GM12878 (cell line): ENCODE measurements at regions of chr19 and their contacts with region 1.

Region 1: GRCh38 chr19:53520550-53521372 is 17.2 kb upstream of the ZNF331 start:
- DNase-seq: peak; percentile 80
- ATAC-seq: peak; percentile 100
- H3K4me3 ChIP-seq: peak overlapping the region; percentile 93
- H3K27ac ChIP-seq: peak overlapping the region; percentile 56
- H3K4me1 ChIP-seq: peaks cover 4% of the 10 kb centered on the region; the same call in 1 of the 2 replicates
- H3K27me3 ChIP-seq: no peaks in the 10 kb centered on the region
- CTCF ChIP-seq: no peak
- EP300 ChIP-seq: no peak
- POLR2A ChIP-seq: peak; percentile 30; the same call in 1 of the 2 replicates
- RAD21 ChIP-seq: no peak

Region 2: GRCh38 chr19:53467485-53468262 is 53.1 kb before region 1 on chr19 and contains the start of gene ZNF813:
- CTCF ChIA-PET with region 1: no interaction called
- POLR2A ChIA-PET with region 1: no interaction called
- RAD21 ChIA-PET with region 1: no interaction called
- SMC1A ChIA-PET with region 1: no interaction called
- in situ Hi-C with region 1: no loop called
- intact Hi-C with region 1: loop called (anchors 1 kb)
- DNase-seq: peak; percentile 64
- ATAC-seq: peak; percentile 99
- H3K4me3 ChIP-seq: peak within 1 kb of the TSS; percentile 96
- H3K27ac ChIP-seq: peak within 1 kb of the TSS; percentile 71
- H3K4me1 ChIP-seq: no peaks in the 10 kb centered on the region
- H3K27me3 ChIP-seq: no peaks in the 10 kb centered on the region
- CTCF ChIP-seq: no peak
- EP300 ChIP-seq: no peak
- POLR2A ChIP-seq: peak; percentile 80
- RAD21 ChIP-seq: no peak
- polyA plus RNA-seq, gene ZNF813: 0.27 to 0.84 TPM

Region 3: GRCh38 chr19:54102421-54103169 is 581.8 kb after region 1 on chr19 and contains the start of gene NDUFA3:
- CTCF ChIA-PET with region 1: no interaction called
- POLR2A ChIA-PET with region 1: interaction called, 4 read pairs
- RAD21 ChIA-PET with region 1: no interaction called
- SMC1A ChIA-PET with region 1: no interaction called
- in situ Hi-C with region 1: no loop called
- intact Hi-C with region 1: loop called (anchors 10 kb)
- DNase-seq: peak; percentile 95
- ATAC-seq: peak; percentile 99
- H3K4me3 ChIP-seq: peak within 1 kb of the TSS; percentile 85
- H3K27ac ChIP-seq: peak within 1 kb of the TSS; percentile 75
- H3K4me1 ChIP-seq: no peaks in the 10 kb centered on the region
- H3K27me3 ChIP-seq: no peaks in the 10 kb centered on the region
- CTCF ChIP-seq: no peak
- EP300 ChIP-seq: no peak
- POLR2A ChIP-seq: peak; percentile 94
- RAD21 ChIP-seq: no peak
- polyA plus RNA-seq, gene NDUFA3: 295 to 302 TPM